Calu3 (cell line): ENCODE measurements at regions of chr1 and their contacts with region 1.

Region 1: GRCh38 chr1:39158327-39159086 is 46.0 kb upstream of the MACF1 start:
- DNase-seq: peak; percentile 86
- H3K4me3 Mint-ChIP-seq: peak overlapping the region; percentile 74
- H3K27ac Mint-ChIP-seq: peak overlapping the region; percentile 94
- H3K4me1 Mint-ChIP-seq: peaks cover 56% of the 10 kb centered on the region
- H3K27me3 Mint-ChIP-seq: no peaks in the 10 kb centered on the region
- CTCF ChIP-seq: no peak

Region 2: DNA sequence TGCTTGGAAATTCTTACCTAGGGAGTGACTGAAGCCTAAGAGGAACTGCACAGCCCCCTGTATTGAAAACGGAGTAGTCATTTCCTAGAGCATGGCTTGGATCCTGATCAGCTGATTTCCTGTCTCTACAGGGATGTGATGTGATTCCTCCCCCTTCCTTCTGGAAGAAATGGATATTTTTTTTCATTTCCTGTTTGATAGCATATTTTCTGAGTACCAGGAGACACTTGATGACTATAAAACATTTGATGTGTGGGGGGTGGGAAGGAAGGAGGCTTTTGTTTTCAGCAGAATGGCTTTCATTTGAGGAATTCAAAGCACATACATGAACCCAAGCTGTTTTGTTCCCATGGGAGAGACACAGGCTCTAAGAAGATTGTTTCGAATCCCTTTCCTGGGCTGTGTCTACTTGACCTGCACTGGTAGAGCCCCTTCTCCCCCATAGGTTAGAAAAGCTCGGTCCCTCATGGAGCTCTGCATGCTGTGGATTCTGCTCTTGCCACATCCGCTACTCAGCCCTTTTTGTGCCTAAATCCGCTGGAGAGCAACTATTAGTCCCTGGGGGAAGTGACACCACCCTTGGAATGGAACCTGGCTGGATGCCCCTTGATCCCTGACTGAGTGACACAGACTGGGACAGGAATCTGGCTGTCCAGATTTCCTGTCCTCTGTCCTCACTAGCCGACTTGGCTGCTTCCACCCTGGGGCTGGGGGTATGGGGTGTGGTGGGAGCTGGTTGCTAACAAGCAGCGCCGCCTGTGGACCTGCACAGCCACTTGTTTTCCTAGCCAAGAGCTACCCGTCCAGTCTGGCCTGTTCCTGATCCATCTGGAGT is 25.8 kb before region 1 on chr1:
- CTCF ChIA-PET with region 1: interaction called, 12 read pairs
- intact Hi-C with region 1: no loop called
- DNase-seq: peak; percentile 85
- H3K4me3 Mint-ChIP-seq: peak overlapping the region; percentile 30
- H3K27ac Mint-ChIP-seq: peak overlapping the region; percentile 79
- H3K4me1 Mint-ChIP-seq: peaks cover 50% of the 10 kb centered on the region
- H3K27me3 Mint-ChIP-seq: no peaks in the 10 kb centered on the region
- CTCF ChIP-seq: peak; percentile 38

Region 3: DNA sequence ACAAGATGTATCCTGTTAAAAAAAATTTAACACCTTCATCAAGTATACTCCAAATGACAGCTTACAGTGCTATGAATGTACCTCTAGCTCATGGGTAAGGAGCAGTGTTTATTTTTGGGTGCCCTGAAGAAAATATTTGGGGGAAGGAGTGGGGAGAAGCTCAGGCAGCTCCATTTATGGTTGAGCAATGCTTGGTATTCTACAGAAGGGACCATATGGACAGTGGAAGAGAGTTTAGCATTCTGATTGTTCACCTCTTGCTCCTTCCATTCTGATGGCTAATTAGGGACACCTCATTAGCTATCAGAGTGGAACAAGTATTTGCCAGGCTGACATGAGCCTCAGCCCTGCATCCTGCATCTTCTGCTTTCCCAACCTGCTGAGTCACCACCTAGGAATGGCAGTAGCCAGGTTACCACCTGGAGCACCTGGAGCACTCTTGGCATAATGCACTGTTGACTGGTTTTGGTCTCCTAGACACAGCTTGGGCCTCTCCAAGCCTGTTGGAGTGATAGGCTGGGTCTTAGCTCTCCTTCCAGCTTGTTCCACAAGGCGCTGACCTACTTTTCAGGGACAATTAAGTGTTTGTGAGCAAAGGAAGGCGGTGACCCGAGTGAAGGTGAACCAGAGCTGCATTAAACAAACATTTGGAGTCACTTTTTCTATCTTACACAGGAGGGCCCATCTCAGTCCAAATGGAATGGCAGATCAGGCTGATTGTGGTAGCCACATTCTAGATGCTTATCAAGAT is 15.9 kb before region 1 on chr1:
- CTCF ChIA-PET with region 1: interaction called, 16 read pairs
- intact Hi-C with region 1: no loop called
- DNase-seq: peak; percentile 53
- H3K4me3 Mint-ChIP-seq: no peak overlapping the region
- H3K27ac Mint-ChIP-seq: no peak overlapping the region
- H3K4me1 Mint-ChIP-seq: peaks cover 40% of the 10 kb centered on the region
- H3K27me3 Mint-ChIP-seq: no peaks in the 10 kb centered on the region
- CTCF ChIP-seq: no peak

Region 4: GRCh38 chr1:39170731-39171667 is 12.5 kb after region 1 on chr1:
- CTCF ChIA-PET with region 1: interaction called, 13 read pairs
- intact Hi-C with region 1: no loop called
- DNase-seq: no peak
- H3K4me3 Mint-ChIP-seq: no peak overlapping the region
- H3K27ac Mint-ChIP-seq: no peak overlapping the region
- H3K4me1 Mint-ChIP-seq: peaks cover 73% of the 10 kb centered on the region
- H3K27me3 Mint-ChIP-seq: no peaks in the 10 kb centered on the region
- CTCF ChIP-seq: no peak

Region 5: DNA sequence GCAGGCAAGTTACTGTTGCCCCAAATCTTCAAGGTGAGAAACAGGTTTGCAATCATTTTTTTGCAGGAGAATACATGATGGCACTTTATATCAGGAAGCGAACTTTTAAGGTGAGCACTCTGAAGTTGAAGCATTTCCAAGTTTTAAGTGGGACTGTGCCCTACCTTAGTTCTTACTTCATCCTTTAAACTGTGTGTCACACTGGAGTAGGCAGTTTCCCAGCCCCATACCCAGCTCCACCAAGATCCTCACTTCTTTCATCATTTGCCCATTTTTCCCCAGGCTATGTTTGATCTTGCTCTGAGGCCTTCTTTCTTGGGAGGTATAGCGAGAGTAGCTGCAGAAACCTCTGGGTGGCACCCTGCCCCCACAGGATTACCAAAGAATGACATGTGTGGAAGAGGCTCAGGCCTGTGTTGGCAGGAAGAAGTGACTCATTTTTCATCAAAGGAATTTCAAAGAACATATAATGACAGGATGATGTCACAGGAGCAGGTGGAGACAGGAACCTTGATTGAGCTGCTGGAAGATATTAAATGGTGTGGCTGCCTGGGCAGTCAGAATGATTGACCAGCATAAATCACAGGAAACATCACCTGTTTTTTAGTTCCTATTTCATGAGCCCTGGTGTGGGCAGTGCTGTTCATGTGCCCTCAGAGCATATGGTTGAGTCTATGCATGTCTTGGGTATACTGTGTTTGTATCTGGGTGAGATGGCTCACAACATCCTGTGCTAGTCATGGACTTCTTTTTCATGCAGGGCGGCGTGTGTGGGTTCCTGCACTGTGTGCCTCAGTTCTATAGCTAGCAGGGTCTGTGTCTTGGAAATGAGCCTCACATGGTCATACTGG is 25.2 kb after region 1 on chr1:
- CTCF ChIA-PET with region 1: interaction called, 13 read pairs
- intact Hi-C with region 1: loop called (anchors 2 kb)
- DNase-seq: peak; percentile 89
- H3K4me3 Mint-ChIP-seq: peak overlapping the region; percentile 51
- H3K27ac Mint-ChIP-seq: peak overlapping the region; percentile 91
- H3K4me1 Mint-ChIP-seq: peaks cover 80% of the 10 kb centered on the region
- H3K27me3 Mint-ChIP-seq: no peaks in the 10 kb centered on the region
- CTCF ChIP-seq: peak; percentile 48

Region 6: GRCh38 chr1:39189592-39190041 is 31.1 kb after region 1 on chr1:
- CTCF ChIA-PET with region 1: interaction called, 37 read pairs
- intact Hi-C with region 1: loop called (anchors 1 kb)
- DNase-seq: no peak
- H3K4me3 Mint-ChIP-seq: peak overlapping the region; percentile 35
- H3K27ac Mint-ChIP-seq: peak overlapping the region; percentile 86
- H3K4me1 Mint-ChIP-seq: peaks cover 86% of the 10 kb centered on the region
- H3K27me3 Mint-ChIP-seq: no peaks in the 10 kb centered on the region
- CTCF ChIP-seq: no peak

Region 7: DNA sequence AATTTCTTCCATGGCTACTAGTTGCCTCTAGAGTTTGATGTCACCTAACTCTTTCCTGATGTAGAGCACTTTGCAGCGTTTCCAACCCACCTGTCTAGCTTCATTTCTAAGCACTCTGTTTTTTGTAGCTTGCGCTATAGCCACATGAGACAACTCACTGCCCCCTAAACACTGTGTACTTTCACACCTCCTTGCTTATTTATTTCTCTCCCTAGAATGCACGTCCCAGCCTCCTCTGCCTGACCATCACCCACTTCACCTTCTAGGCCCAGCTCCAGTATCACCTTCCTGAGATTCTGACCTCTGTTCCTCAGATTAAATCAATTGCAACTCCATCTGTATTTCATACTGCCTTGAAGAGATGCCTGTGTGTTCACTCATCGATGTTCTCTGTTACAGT is 78.5 kb after region 1 on chr1:
- CTCF ChIA-PET with region 1: no interaction called
- intact Hi-C with region 1: no loop called
- DNase-seq: no peak
- H3K4me3 Mint-ChIP-seq: no peak overlapping the region
- H3K27ac Mint-ChIP-seq: no peak overlapping the region
- H3K4me1 Mint-ChIP-seq: peaks cover 8% of the 10 kb centered on the region
- H3K27me3 Mint-ChIP-seq: no peaks in the 10 kb centered on the region
- CTCF ChIP-seq: no peak